Naive thymus-derived CD8-positive, alpha-beta T cell (primary cell): ENCODE measurements at regions of chr19 and their contacts with region 1.

Region 1: GRCh38 chr19:4304530-4305252 is at the start of gene FSD1:
- DNase-seq: peak; percentile 45 to 74 (median 64)
- ATAC-seq: peak; percentile 53 to 74
- H3K4me3 Mint-ChIP-seq: peak within 1 kb of the TSS; percentile 63 to 98 (median 76)
- H3K27ac Mint-ChIP-seq: peak within 1 kb of the TSS in 9 of 10 donors; percentile 74 to 99 (median 88)
- H3K4me1 Mint-ChIP-seq: peaks cover 19 to 45% (median 36%) of the 10 kb centered on the region in 4 donors
- H3K27me3 Mint-ChIP-seq: no peaks in the 10 kb centered on the region
- polyA plus RNA-seq, gene FSD1: 1.5 to 3.9 (median 3.4) TPM

Region 2: GRCh38 chr19:4035582-4035981 is 269.1 kb before region 1 on chr19:
- POLR2A ChIA-PET with region 1: no interaction called
- DNase-seq: no peak
- ATAC-seq: peak in 1 of 2 donors; percentile 11
- H3K4me3 Mint-ChIP-seq: no peak overlapping the region
- H3K27ac Mint-ChIP-seq: no peak overlapping the region
- H3K4me1 Mint-ChIP-seq: peaks cover 0 to 8% (median 5%) of the 10 kb centered on the region in 4 donors
- H3K27me3 Mint-ChIP-seq: no peaks in the 10 kb centered on the region

Region 3: GRCh38 chr19:4322942-4323665 is 18.4 kb after region 1 on chr19:
- POLR2A ChIA-PET with region 1: interaction called, 22 read pairs
- DNase-seq: no peak
- ATAC-seq: no peak
- H3K4me3 Mint-ChIP-seq: no peak overlapping the region
- H3K27ac Mint-ChIP-seq: no peak overlapping the region
- H3K4me1 Mint-ChIP-seq: peaks cover 16 to 23% (median 20%) of the 10 kb centered on the region in 4 donors
- H3K27me3 Mint-ChIP-seq: peaks cover 0 to 2% (median 0%) of the 10 kb centered on the region in 5 donors

Region 4: DNA sequence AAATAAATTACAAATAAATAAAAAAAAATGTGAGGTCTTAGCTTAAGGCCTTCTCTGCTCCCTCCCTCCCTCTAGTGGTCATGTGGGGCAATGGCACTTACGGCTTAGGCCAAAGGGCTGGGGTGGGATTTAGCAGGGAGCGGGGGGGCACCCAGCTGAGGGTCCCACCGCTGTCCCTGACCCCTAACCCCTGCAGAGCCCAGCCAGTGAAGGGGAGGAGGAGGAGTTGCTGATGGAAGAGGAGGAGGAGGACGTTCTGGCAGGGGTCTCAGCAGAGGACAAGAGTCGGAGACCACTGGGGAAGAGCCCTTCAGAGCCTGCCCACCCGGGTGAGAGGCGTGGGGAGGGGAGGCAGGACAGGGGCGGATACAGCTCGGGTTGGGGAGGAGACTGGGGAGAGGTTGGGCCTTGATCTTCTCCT is 48.0 kb after region 1 on chr19:
- POLR2A ChIA-PET with region 1: interaction called, 10 read pairs
- DNase-seq: peak; percentile 33 to 86 (median 64)
- ATAC-seq: peak; percentile 74 to 85
- H3K4me3 Mint-ChIP-seq: no peak overlapping the region
- H3K27ac Mint-ChIP-seq: peak overlapping the region in 5 of 10 donors; percentile 48 to 74 (median 57)
- H3K4me1 Mint-ChIP-seq: peaks cover 1 to 6% (median 4%) of the 10 kb centered on the region in 4 donors
- H3K27me3 Mint-ChIP-seq: no peaks in the 10 kb centered on the region